ENCODE measurements at regions of chr4 and their contacts with region 1.

Region 1: GRCh38 chr4:164937576-164938270 is 39.7 kb downstream of the TRIM61 start:
- DNase-seq: peak in 1 of 2 experiments; percentile 33
- H3K4me3 ChIP-seq: no peak overlapping the region
- H3K4me3 Mint-ChIP-seq: no peak overlapping the region
- H3K27ac Mint-ChIP-seq: no peak overlapping the region
- H3K4me1 ChIP-seq: no peaks in the 10 kb centered on the region
- H3K4me1 Mint-ChIP-seq: no peaks in the 10 kb centered on the region
- H3K27me3 ChIP-seq: no peaks in the 10 kb centered on the region
- H3K27me3 Mint-ChIP-seq: no peaks in the 10 kb centered on the region
- CTCF ChIP-seq: peak; percentile 16 to 33

Region 2: GRCh38 chr4:164768516-164768915 is 169.2 kb before region 1 on chr4:
- CTCF ChIA-PET with region 1: interaction called, 11 read pairs
- POLR2A ChIA-PET with region 1: no interaction called
- intact Hi-C with region 1: loop called (anchors 1 kb)
- DNase-seq: no peak
- H3K4me3 ChIP-seq: no peak overlapping the region
- H3K4me3 Mint-ChIP-seq: no peak overlapping the region
- H3K27ac Mint-ChIP-seq: no peak overlapping the region
- H3K4me1 ChIP-seq: no peaks in the 10 kb centered on the region
- H3K4me1 Mint-ChIP-seq: peaks cover 20% of the 10 kb centered on the region
- H3K27me3 ChIP-seq: no peaks in the 10 kb centered on the region
- H3K27me3 Mint-ChIP-seq: no peaks in the 10 kb centered on the region
- CTCF ChIP-seq: peak; percentile 19 to 47

Region 3: GRCh38 chr4:164997324-164997723 is 59.6 kb after region 1 on chr4:
- CTCF ChIA-PET with region 1: interaction called, 5 read pairs
- POLR2A ChIA-PET with region 1: no interaction called
- intact Hi-C with region 1: loop called (anchors 1 kb)
- DNase-seq: peak in 1 of 2 experiments; percentile 15
- H3K4me3 ChIP-seq: no peak overlapping the region
- H3K4me3 Mint-ChIP-seq: no peak overlapping the region
- H3K27ac Mint-ChIP-seq: no peak overlapping the region
- H3K4me1 ChIP-seq: no peaks in the 10 kb centered on the region; the same call in 1 of the 2 replicates
- H3K4me1 Mint-ChIP-seq: no peaks in the 10 kb centered on the region
- H3K27me3 ChIP-seq: no peaks in the 10 kb centered on the region
- H3K27me3 Mint-ChIP-seq: no peaks in the 10 kb centered on the region
- CTCF ChIP-seq: no peak

Region 4: DNA sequence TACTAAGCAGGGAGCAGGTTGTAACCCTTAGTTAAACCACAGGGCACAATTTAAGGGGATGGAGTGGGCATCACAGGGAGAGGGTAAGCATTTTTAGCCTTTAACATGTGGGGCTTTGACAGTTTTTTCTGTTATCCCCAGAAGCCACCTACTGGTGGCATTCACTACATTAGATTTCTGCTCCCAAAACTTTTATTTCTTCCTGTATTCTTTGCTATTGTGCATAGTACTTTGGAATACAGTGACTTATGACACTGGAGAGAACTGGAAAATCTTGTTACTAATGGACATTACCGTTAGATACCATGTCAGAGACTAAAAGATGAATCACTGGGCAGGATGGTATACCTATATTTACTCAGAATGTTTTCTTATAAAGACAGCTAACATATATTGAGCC is 123.2 kb after region 1 on chr4:
- CTCF ChIA-PET with region 1: no interaction called
- POLR2A ChIA-PET with region 1: no interaction called
- intact Hi-C with region 1: loop called (anchors 1 kb)
- DNase-seq: no peak
- H3K4me3 ChIP-seq: no peak overlapping the region
- H3K4me3 Mint-ChIP-seq: no peak overlapping the region
- H3K27ac Mint-ChIP-seq: no peak overlapping the region
- H3K4me1 ChIP-seq: no peaks in the 10 kb centered on the region
- H3K4me1 Mint-ChIP-seq: no peaks in the 10 kb centered on the region
- H3K27me3 ChIP-seq: no peaks in the 10 kb centered on the region
- H3K27me3 Mint-ChIP-seq: peaks cover 2% of the 10 kb centered on the region
- CTCF ChIP-seq: peak; percentile 19 to 21

Region 5: DNA sequence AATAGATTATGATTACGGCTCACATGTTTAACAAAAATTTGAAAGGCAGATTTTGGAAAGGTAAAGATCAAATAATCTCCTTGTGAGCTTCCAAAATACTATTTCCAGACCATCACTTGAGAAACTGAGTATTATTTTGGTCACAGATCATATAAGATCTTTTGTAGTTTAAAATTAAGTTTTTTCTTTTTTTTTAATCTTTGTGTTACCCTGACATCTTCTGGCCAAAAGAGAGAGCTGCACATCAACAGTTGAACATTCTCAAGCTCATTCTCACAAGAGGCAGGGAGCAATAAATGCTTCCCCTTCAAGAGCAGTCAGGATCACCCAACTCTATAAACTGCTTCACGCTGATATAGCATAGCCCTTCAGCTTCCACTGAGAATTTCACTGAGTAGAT is 159.1 kb after region 1 on chr4:
- CTCF ChIA-PET with region 1: interaction called, 6 read pairs
- POLR2A ChIA-PET with region 1: no interaction called
- intact Hi-C with region 1: loop called (anchors 2 kb)
- DNase-seq: peak in 1 of 2 experiments; percentile 18
- H3K4me3 ChIP-seq: no peak overlapping the region
- H3K4me3 Mint-ChIP-seq: no peak overlapping the region
- H3K27ac Mint-ChIP-seq: no peak overlapping the region
- H3K4me1 ChIP-seq: no peaks in the 10 kb centered on the region
- H3K4me1 Mint-ChIP-seq: no peaks in the 10 kb centered on the region
- H3K27me3 ChIP-seq: no peaks in the 10 kb centered on the region
- H3K27me3 Mint-ChIP-seq: no peaks in the 10 kb centered on the region
- CTCF ChIP-seq: peak; percentile 54 to 63

Region 6: GRCh38 chr4:165118256-165118909 is 180.7 kb after region 1 on chr4:
- CTCF ChIA-PET with region 1: no interaction called
- POLR2A ChIA-PET with region 1: no interaction called
- intact Hi-C with region 1: no loop called
- DNase-seq: no peak
- H3K4me3 ChIP-seq: no peak overlapping the region
- H3K4me3 Mint-ChIP-seq: no peak overlapping the region
- H3K27ac Mint-ChIP-seq: no peak overlapping the region
- H3K4me1 ChIP-seq: 0 out of 2 replicates have a peak, but pooled peaks cover 4% of the 10 kb centered on the region
- H3K4me1 Mint-ChIP-seq: no peaks in the 10 kb centered on the region
- H3K27me3 ChIP-seq: no peaks in the 10 kb centered on the region
- H3K27me3 Mint-ChIP-seq: no peaks in the 10 kb centered on the region
- CTCF ChIP-seq: no peak

Measured in Caco-2 (cell line).